Stomach (tissue), 19 donors: ENCODE measurements at regions of chr16 and their contacts with region 1.

Region 1: GRCh38 chr16:19886073-19886941 is 1.7 kb upstream of the GPRC5B start:
- DNase-seq: peak; percentile 78 to 92
- H3K4me3 ChIP-seq: peak overlapping the region; percentile 67 to 80 (median 70)
- H3K27ac ChIP-seq: peak overlapping the region in 3 of 5 donors; percentile 72 to 88 (median 87)
- H3K4me1 ChIP-seq: peaks cover 12 to 49% (median 39%) of the 10 kb centered on the region in 4 donors
- H3K27me3 ChIP-seq: peaks cover 0 to 36% (median 5%) of the 10 kb centered on the region in 3 donors
- CTCF ChIP-seq: peak; percentile 42 to 100 (median 99)
- EP300 ChIP-seq: no peak
- POLR2A ChIP-seq: no peak

Region 2: GRCh38 chr16:19601083-19601976 is 285.0 kb before region 1 on chr16:
- intact Hi-C with region 1: loop called (anchors 5 kb)
- DNase-seq: peak in 1 of 2 donors; percentile 72
- H3K4me3 ChIP-seq: no peak overlapping the region
- H3K27ac ChIP-seq: no peak overlapping the region
- H3K4me1 ChIP-seq: no peaks in the 10 kb centered on the region
- H3K27me3 ChIP-seq: no peaks in the 10 kb centered on the region
- CTCF ChIP-seq: peak in 5 of 7 experiments; percentile 20 to 75 (median 56)
- EP300 ChIP-seq: no peak
- POLR2A ChIP-seq: no peak

Region 3: GRCh38 chr16:19717771-19718602 is 168.3 kb before region 1 on chr16 and contains the starts of genes IQCK and KNOP1:
- intact Hi-C with region 1: loop called (anchors 10 kb)
- DNase-seq: peak; percentile 92 to 97
- H3K4me3 ChIP-seq: peak within 1 kb of the TSS; percentile 82 to 100 (median 94)
- H3K27ac ChIP-seq: peak within 1 kb of the TSS; percentile 73 to 89 (median 88)
- H3K4me1 ChIP-seq: peaks cover 10 to 49% (median 41%) of the 10 kb centered on the region in 4 donors
- H3K27me3 ChIP-seq: no peaks in the 10 kb centered on the region
- CTCF ChIP-seq: no peak
- EP300 ChIP-seq: no peak
- POLR2A ChIP-seq: no peak
- total RNA-seq, gene IQCK: 3.5 to 100.0 (median 20.7) TPM
- total RNA-seq, gene KNOP1: 7.2 to 26.3 (median 14.2) TPM

Region 4: GRCh38 chr16:20014034-20014433 is 127.7 kb after region 1 on chr16:
- intact Hi-C with region 1: no loop called
- DNase-seq: no peak
- H3K4me3 ChIP-seq: no peak overlapping the region
- H3K27ac ChIP-seq: no peak overlapping the region
- H3K4me1 ChIP-seq: peaks cover 0 to 6% (median 0%) of the 10 kb centered on the region in 4 donors
- H3K27me3 ChIP-seq: no peaks in the 10 kb centered on the region
- CTCF ChIP-seq: no peak
- EP300 ChIP-seq: no peak
- POLR2A ChIP-seq: no peak

Region 5: DNA sequence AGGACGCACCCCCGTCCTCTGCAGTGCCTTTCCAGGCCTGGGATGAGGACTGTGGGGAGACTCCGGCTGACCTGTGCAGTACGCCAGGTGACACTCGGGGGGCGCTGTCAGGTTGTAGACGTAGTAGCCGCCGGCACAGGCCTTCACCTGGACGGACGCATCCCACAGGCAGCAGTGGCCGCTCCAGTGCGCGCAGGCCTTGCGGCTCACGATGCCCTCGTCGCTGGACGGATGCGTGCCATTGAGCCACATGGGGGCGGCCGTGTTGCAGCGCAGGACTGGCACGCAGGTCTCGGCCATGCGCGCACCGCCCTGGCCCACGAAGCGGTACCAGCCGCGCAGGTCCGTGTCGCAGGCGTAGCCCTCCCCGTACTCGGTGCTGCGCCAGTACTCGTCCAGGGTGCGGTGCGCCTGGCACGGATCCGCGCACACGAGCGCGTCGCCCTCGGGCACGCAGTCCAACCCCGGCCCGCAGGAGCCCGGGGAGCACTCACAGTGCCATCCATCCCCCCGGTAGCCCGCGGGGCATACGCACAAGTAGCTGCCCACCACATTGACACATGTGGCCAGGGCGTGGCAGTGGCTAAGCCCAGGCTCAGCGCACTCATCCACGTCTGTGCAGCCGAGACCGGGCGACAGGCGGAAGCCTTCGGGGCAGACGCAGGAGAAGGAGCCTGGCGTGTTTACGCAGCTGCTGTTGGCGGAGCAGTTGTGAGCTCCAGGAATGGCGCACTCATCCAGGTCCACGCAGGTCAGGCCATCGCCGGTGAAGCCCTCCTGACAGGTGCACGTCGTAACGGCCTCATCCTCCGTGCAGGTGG is 462.3 kb after region 1 on chr16:
- intact Hi-C with region 1: no loop called
- DNase-seq: peak; percentile 33 to 57
- H3K4me3 ChIP-seq: peak overlapping the region in 1 of 4 donors; percentile 12
- H3K27ac ChIP-seq: no peak overlapping the region
- H3K4me1 ChIP-seq: peaks cover 0 to 9% (median 4%) of the 10 kb centered on the region in 4 donors
- H3K27me3 ChIP-seq: peaks cover 0 to 19% (median 0%) of the 10 kb centered on the region in 3 donors
- CTCF ChIP-seq: peak in 3 of 7 experiments; percentile 11 to 22 (median 12)
- EP300 ChIP-seq: no peak
- POLR2A ChIP-seq: no peak